AG04450 (cell line): ENCODE measurements at regions of chr3 and their contacts with region 1.

Region 1: GRCh38 chr3:170869645-170870593 is at the start of gene RPL22L1:
- DNase-seq: peak; percentile 81
- H3K4me3 ChIP-seq: peak within 1 kb of the TSS; percentile 96
- H3K27ac ChIP-seq: peak within 1 kb of the TSS; percentile 81
- H3K27me3 ChIP-seq: no peaks in the 10 kb centered on the region
- CTCF ChIP-seq: peak; percentile 32
- polyA plus RNA-seq, gene RPL22L1: 121 and 171 TPM in 2 replicates

Region 2: DNA sequence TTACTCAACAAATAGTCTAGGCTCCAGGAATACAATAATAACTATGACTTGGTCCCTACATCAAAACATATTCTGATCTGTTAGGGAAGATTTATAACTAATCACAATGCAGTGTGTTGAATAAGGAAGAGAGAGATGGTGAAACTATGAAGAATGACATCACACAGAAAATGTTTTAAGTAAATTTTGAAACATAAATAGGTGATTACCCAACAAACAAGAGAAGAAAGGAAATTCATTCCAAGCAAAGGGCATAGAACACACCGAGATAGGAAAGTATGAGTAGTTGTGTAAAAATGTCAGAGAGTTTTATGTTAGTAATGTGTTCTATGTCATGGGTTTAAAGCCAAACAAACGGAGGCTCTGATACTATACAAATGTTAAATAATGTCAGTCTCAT is 889.9 kb before region 1 on chr3:
- CTCF ChIA-PET with region 1: no interaction called
- POLR2A ChIA-PET with region 1: no interaction called
- DNase-seq: peak; percentile 27
- H3K4me3 ChIP-seq: no peak overlapping the region
- H3K27ac ChIP-seq: peak overlapping the region; percentile 40
- H3K27me3 ChIP-seq: no peaks in the 10 kb centered on the region
- CTCF ChIP-seq: no peak

Region 3: DNA sequence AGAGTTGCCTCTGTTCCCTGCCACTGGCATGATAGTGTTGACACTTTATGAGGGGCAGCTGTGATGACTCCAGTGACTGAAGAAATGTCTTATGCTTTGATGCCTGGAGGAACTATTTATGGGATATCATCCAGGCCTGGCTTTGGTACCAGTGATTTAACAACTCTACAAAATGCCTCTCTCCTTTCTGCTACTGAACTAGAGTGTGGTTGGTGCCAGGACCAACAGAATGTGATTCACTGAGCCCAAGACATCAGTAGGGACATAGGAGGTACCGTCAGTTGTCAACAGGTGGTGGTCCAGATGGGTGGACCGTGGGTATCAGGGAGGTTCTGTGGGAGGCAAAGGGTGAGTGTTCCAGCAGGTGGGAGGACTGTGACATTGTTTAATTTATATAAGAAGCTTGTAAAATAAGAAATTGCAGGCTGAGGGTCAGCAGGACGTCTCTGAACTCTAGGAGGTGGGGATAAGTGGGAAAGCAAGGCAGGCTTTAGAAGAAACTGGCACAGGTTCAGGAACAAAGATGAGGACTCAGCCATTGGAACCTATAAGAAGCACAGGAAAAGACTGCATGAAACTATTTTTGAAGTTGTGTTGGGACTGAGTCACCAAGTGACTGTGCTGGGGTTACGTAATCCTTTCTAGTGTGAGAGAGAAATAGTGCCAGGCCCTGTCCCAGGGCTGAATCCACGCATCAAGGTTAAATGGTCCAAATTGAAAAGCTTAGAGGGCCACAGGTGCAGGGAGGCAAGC is 255.5 kb before region 1 on chr3:
- CTCF ChIA-PET with region 1: no interaction called
- POLR2A ChIA-PET with region 1: no interaction called
- DNase-seq: peak; percentile 51
- H3K4me3 ChIP-seq: no peak overlapping the region
- H3K27ac ChIP-seq: peak overlapping the region; percentile 21
- H3K27me3 ChIP-seq: no peaks in the 10 kb centered on the region
- CTCF ChIP-seq: no peak

Region 4: GRCh38 chr3:170778240-170779217 is 91.4 kb before region 1 on chr3:
- CTCF ChIA-PET with region 1: no interaction called
- POLR2A ChIA-PET with region 1: no interaction called
- DNase-seq: no peak
- H3K4me3 ChIP-seq: no peak overlapping the region
- H3K27ac ChIP-seq: no peak overlapping the region
- H3K27me3 ChIP-seq: no peaks in the 10 kb centered on the region
- CTCF ChIP-seq: no peak

Region 5: GRCh38 chr3:170908235-170909116 is 38.6 kb after region 1 on chr3 and contains the start of gene EIF5A2:
- CTCF ChIA-PET with region 1: no interaction called
- POLR2A ChIA-PET with region 1: interaction called, 12 read pairs
- DNase-seq: peak; percentile 82
- H3K4me3 ChIP-seq: peak within 1 kb of the TSS; percentile 80
- H3K27ac ChIP-seq: peak within 1 kb of the TSS; percentile 84
- H3K27me3 ChIP-seq: no peaks in the 10 kb centered on the region
- CTCF ChIP-seq: no peak
- polyA plus RNA-seq, gene EIF5A2: 17.6 and 20.5 TPM in 2 replicates

Region 6: DNA sequence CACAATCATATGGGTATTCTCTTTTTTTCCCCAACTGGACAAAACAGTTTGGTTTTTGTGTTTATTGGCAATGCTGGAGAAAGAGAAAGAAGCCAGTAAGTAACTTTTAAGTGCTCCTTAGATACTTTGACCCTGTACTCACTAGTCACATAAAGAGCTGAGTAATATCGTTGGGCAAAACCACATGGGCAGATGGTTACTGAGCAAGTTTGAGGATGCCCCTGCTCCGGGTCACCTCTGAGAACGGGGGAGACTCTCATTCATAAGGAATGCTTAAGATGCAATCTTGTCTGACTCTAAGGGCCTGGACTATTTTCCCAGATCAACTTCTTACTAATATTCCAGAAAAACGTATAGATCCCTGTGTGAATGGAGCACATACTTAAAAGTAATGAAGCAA is 263.0 kb after region 1 on chr3:
- CTCF ChIA-PET with region 1: no interaction called
- POLR2A ChIA-PET with region 1: no interaction called
- DNase-seq: peak; percentile 30
- H3K4me3 ChIP-seq: no peak overlapping the region
- H3K27ac ChIP-seq: no peak overlapping the region
- H3K27me3 ChIP-seq: no peaks in the 10 kb centered on the region
- CTCF ChIP-seq: no peak